ENCODE measurements at regions of chr3 and their contacts with region 1.

Region 1: DNA sequence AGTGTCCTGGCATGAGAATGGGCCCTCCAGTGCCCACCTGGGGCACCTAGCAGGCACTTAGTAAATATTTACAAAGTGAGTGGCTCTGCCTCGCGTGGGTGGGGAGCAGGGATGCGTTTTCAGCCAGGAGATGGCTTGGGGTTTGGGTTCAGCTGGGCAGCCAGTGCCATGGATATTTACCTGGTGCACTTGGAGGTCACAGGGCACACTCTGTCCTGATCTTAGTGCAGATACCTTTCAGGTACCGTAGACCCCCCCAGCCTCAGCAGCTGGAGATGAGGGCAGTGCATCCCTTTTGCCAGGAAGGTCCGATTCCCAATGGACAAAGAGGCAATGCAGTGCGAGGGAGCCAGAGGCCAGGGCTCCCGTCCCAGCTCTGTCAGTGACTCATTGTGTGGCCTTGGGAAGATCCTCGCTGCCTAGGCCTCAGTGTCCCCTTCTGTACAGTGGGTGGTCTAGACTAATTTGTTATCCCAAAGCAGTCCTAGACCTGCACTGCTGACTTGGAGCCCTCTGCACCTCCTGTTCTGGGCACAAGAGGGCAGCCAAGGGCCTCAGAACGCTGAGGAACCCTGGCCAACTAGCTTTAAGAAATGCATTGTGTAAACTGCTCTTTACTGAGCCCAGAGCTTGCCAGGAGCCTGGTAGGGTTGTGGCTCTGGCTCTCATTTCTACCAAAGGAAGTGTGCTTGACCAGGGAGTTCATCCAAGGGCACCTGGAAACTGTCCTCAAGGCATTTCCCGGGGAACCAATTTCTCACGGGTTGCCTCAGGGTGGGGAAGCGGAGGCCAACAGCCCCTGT is 16.0 kb downstream of the HDAC11 start:
- DNase-seq: peak; percentile 59 to 74
- ATAC-seq: peak; percentile 95

Region 2: GRCh38 chr3:13173186-13173585 is 322.9 kb before region 1 on chr3:
- intact Hi-C with region 1: no loop called
- DNase-seq: no peak
- ATAC-seq: no peak

Region 3: DNA sequence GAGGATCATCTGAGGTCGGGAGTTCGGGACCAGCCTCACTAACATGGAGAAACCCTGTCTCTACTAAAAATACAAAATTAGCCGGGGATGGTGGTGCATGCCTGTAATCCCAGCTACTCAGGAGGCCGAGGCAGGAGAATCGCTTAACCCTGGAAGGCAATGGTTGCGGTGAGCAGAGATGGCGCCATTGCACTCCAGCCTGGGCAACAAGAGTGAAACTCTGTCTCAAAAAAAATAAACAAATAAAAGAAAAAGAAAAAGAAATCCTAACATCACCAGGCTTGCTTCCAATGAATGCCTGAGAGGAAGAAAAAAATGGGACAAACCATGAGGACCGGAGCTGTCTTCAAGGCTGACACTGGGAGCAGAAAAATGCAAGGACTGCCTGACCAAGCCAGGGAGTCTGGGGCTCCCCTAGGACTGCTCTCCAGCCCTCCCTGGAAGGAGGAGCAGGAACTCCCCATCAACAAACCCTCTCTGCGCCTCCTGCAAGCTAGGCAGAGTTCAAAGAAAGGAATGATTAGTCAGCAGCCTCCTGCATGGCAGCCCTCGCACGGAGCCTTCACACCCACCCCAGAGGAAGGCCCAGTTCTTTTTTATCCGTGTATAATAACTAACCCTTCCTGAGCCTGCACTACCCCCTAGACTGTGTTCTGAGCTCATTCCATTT is 131.4 kb before region 1 on chr3:
- intact Hi-C with region 1: no loop called
- DNase-seq: no peak
- ATAC-seq: no peak

Region 4: DNA sequence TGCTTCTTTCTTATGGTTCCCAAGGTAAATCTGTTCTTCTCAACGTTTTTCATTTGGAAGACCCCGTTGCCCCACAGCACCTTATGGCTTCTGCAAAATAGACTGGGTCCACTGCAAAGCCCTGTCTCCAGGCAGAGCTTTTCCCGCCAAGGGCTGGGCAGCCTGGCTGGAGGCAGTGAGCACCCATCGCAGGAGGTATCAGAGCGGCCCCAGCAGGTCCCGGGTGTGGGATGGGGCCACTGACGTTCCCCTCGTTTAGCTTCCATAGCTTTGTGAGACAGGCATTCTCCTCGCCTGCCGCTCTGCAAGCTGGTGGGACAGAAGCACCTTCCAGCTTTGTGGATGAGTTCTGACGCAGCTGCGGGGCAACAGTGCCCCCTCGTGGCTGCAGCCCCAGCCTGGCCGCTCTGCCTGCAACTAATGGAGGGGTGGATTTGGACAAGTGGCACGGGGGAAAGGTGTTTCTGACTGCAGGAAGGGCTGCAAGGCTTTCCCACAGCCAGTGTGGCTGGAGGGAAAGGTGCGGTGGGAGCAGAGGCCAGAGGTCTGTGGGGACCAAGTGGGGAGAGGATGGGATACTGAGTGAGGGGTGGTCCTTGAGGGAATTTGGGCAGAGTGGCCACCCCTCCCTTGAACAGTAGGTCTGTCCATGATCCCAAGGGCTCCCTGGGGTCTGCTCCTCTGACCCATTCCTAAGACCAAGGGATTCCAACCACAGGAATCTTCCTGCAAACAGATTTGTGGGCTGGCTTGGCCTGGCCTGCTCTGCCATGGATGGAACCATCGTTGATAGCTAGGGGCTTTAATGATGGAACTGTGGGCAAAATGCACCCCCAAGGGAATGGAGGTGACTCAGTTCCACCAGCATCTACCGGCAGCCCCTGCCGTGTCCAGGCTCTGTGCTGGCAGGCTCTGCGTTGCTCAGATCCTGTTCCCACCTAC is 152.2 kb after region 1 on chr3:
- intact Hi-C with region 1: loop called (anchors 2 to 5 kb)
- DNase-seq: peak; percentile 46 to 80
- ATAC-seq: peak; percentile 81